ENCODE measurements at regions of chr6 and their contacts with region 1.

Region 1: GRCh38 chr6:137823826-137824555 is 43.1 kb upstream of the TNFAIP3 start:
- DNase-seq: peak; percentile 59 to 100 (median 95)
- ATAC-seq: peak; percentile 87
- H3K4me3 ChIP-seq: peak overlapping the region; percentile 33
- H3K4me3 Mint-ChIP-seq: peak overlapping the region; percentile 72 to 86 (median 79)
- H3K27ac ChIP-seq: peak overlapping the region; percentile 99
- H3K27ac Mint-ChIP-seq: peak overlapping the region; percentile 96 to 100 (median 100)
- H3K4me1 ChIP-seq: peaks cover 43 to 76% of the 10 kb centered on the region in 2 donors
- H3K4me1 Mint-ChIP-seq: peaks cover 48 to 98% (median 93%) of the 10 kb centered on the region in 7 donors
- H3K27me3 ChIP-seq: no peaks in the 10 kb centered on the region
- H3K27me3 Mint-ChIP-seq: no peaks in the 10 kb centered on the region

Region 2: DNA sequence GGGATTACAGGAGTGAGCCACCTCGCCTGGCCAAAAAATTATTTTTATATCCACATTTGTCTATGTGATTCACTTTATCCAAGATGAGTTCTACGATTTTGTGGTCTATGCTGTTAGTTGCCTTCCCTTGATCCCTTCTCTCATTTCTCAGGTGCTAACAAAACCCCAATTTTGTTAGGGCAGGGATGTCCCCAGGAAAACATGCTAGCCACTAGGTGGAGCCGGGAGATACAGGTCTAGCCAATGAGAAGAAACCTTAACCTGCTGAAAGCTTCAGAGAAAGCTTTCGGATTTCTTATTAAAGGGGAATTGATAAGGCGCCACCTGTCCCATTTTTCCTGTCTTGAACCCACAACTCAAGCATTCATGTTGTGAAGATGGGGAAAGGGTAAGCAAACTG is 162.4 kb before region 1 on chr6:
- CTCF ChIA-PET with region 1: no interaction called
- POLR2A ChIA-PET with region 1: no interaction called
- intact Hi-C with region 1: loop called in 1 of 2 experiments (anchors 2 kb)
- DNase-seq: peak in 5 of 9 donors; percentile 11 to 45 (median 28)
- ATAC-seq: no peak
- H3K4me3 ChIP-seq: no peak overlapping the region
- H3K4me3 Mint-ChIP-seq: no peak overlapping the region
- H3K27ac ChIP-seq: no peak overlapping the region
- H3K27ac Mint-ChIP-seq: no peak overlapping the region
- H3K4me1 ChIP-seq: peaks cover 0 to 4% of the 10 kb centered on the region in 2 donors
- H3K4me1 Mint-ChIP-seq: peaks cover 0 to 43% (median 0%) of the 10 kb centered on the region in 7 donors
- H3K27me3 ChIP-seq: no peaks in the 10 kb centered on the region
- H3K27me3 Mint-ChIP-seq: peaks cover 0 to 11% (median 0%) of the 10 kb centered on the region in 5 donors

Region 3: DNA sequence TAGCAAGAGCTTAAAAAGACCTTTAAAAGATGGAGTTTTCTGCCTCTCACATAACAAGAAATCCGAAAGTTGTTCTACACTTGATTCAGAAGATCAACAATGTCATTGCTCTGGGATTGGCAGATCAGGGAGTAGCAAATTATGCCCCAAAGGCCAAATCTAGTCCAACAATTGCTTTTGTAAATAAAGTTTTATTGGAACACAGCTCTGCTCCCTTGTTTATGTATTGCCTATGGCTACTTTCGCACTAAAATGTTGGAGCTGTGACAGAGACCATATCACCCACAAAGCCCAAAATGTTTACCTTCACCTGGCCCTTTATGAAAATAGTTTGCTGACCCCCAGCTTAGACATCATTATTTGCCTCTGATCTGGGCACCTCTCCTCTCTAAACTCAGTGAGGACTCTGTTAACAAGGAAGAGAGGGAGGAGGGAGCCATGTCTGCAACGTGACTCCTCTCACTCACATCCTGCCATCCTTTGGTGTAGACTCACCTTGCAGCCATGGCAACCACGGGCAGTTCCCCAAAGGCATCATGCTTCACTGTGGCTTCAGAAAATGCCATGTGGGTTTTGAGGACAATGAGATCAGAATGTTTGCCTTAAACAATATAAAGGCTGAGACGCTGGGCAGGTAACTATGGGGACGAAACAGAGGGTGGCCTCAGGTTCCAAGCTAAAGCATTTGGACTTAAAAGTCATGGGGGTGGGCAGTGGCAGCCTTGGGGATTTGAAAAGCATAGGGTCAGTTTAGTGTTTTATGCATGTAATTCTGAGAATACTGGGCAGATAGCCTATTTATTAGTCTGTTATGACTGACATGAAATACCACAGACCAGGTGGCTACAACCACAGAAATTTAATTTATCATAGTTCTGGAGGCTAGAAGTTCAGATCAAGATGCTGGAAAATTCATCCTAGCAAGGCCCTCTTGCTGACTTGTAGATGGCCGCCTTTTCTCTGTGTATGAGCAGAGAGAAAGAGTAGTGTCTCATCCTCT is 106.6 kb before region 1 on chr6:
- CTCF ChIA-PET with region 1: no interaction called
- POLR2A ChIA-PET with region 1: no interaction called
- intact Hi-C with region 1: loop called (anchors 1 kb)
- DNase-seq: peak; percentile 44 to 85 (median 76)
- ATAC-seq: peak; percentile 74
- H3K4me3 ChIP-seq: no peak overlapping the region
- H3K4me3 Mint-ChIP-seq: peak overlapping the region in 8 of 10 donors; percentile 1 to 76 (median 23)
- H3K27ac ChIP-seq: peak overlapping the region; percentile 65
- H3K27ac Mint-ChIP-seq: peak overlapping the region; percentile 56 to 96 (median 93)
- H3K4me1 ChIP-seq: peaks cover 17 to 36% of the 10 kb centered on the region in 2 donors
- H3K4me1 Mint-ChIP-seq: peaks cover 23 to 65% (median 40%) of the 10 kb centered on the region in 7 donors
- H3K27me3 ChIP-seq: no peaks in the 10 kb centered on the region
- H3K27me3 Mint-ChIP-seq: no peaks in the 10 kb centered on the region

Region 4: DNA sequence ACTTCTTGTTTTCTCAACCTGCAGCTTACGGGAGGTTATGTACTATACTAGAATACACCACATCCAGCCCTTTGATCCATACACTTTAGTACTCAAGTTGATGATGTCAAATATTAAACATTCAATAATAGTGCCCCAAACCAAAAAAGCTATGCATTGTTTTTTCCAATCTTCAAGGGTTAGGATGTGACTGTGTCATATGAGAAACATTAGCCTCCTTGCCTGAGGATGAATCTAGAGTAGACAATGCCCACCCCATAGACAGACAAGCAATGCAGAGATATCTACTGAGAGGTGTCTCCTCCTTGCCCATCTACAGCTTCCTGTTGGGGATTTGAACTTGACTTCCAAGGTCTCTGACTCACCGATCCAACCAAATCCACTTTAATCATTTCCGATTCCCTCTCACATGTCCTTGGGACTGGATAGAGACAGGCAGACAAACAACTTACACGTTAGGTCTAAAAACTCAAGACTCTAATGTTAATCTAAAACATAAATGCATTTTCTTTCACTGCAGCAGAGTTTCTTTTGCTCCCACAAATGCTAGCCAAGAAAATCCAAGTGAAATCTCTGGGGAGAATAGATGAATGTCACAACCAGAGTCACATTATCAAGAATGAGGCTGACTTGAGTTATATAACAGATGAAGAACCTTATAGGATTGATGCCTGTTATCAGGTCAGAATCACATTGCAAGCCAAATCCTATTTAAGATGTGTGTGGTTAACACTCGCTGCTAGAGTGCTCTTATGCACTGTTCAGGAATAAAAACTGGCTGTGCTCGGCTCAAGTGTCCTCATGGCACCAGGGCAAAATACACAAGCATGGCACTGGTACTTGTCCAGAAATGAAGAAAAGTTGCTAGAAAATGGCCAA is 32.5 kb before region 1 on chr6:
- CTCF ChIA-PET with region 1: no interaction called
- POLR2A ChIA-PET with region 1: interaction called, 4 read pairs
- intact Hi-C with region 1: loop called in 1 of 2 experiments (anchors 2 kb)
- DNase-seq: peak in 1 of 9 donors; percentile 26
- ATAC-seq: no peak
- H3K4me3 ChIP-seq: no peak overlapping the region
- H3K4me3 Mint-ChIP-seq: peak overlapping the region in 1 of 10 donors; percentile 45
- H3K27ac ChIP-seq: no peak overlapping the region
- H3K27ac Mint-ChIP-seq: peak overlapping the region in 8 of 9 donors; percentile 1 to 79 (median 36)
- H3K4me1 ChIP-seq: peaks cover 7 to 28% of the 10 kb centered on the region in 2 donors
- H3K4me1 Mint-ChIP-seq: peaks cover 27 to 65% (median 50%) of the 10 kb centered on the region in 7 donors
- H3K27me3 ChIP-seq: no peaks in the 10 kb centered on the region
- H3K27me3 Mint-ChIP-seq: no peaks in the 10 kb centered on the region

Region 5: DNA sequence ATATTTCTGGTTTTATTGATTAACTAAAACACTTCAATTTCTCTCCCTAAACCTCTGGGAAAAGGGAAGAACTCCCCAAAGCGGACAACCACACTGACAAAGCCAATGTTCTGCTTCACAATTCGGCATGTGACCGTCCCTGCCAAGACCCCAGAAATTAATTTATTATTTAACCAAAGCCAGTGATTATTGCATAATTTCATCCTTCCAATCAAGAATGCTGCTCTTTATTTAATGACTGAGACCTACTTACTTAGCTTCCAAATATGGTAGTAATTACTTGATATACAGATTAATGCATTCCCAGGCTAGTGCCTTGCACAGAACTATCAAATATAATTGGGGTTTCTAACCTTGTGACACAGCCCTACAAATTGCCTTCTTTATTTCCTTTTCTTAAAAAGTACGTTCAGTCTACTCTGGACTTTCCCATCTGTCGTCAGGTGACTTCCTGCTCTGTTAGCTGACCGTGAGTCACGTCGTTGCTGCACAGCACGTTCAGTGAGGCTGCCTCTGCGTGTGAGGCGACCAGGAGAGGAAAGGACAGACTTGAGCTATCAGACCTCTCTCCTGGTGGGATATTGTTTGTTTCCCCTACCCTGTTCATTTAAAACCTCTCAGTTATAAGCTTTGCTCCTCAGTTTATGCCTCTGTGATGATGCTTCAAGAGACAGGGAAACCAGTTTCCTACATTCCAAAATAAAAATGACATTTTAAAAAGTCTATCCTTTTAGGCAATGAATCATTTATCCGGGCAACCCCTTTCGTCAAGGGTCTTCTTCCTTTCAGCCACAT is 12.7 kb before region 1 on chr6:
- CTCF ChIA-PET with region 1: interaction called, 7 read pairs
- POLR2A ChIA-PET with region 1: interaction called, 17 read pairs
- intact Hi-C with region 1: loop called (anchors 1 kb)
- DNase-seq: peak; percentile 42 to 85 (median 53)
- ATAC-seq: peak; percentile 94
- H3K4me3 ChIP-seq: peak overlapping the region; percentile 14
- H3K4me3 Mint-ChIP-seq: peak overlapping the region; percentile 71 to 84 (median 78)
- H3K27ac ChIP-seq: peak overlapping the region; percentile 60
- H3K27ac Mint-ChIP-seq: peak overlapping the region; percentile 89 to 96 (median 93)
- H3K4me1 ChIP-seq: peaks cover 17 to 23% of the 10 kb centered on the region in 2 donors
- H3K4me1 Mint-ChIP-seq: peaks cover 22 to 56% (median 46%) of the 10 kb centered on the region in 7 donors
- H3K27me3 ChIP-seq: no peaks in the 10 kb centered on the region
- H3K27me3 Mint-ChIP-seq: no peaks in the 10 kb centered on the region